ENCODE measurements at regions of chr14 and their contacts with region 1.

Region 1: DNA sequence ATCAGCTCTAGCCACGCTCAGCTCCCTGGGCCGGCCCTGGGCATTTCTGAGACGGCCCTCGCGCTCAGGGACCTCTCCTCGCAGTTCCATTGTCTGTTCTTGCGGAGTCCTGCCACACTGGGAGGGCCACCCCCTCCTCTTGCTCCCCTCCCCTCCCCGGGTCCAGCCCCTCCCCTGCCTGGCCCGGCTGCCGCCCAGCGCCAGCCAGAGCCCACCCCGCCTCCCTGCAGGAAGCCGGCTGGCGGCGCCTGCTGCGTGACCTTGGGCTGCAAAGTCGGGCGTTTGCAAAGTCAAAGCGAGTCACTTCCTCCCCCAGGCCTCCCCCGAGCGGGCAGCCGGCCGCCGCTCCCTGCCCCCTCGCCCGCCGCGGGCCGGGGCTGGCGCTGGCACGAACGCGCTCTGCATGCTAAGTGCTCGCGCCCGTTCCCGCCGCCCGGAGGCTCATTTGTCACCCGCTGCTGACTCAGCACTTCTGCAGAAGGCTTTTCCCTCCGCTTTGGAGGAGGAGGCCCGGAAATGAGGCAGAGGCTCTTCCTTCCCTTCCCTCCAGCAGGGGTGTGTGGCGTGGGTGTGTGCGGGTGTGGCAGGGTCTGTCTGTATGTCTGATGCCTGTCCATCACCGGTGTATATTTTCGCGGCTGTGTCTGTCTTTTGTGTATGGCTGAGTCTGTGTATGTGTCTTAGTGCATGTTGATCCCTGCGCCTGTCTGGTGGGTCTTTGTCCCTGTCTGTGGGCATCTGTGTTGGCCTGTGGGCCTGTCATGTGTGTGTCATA is 72.0 kb downstream of the IRF2BPL start:
- DNase-seq: peak; percentile 85
- H3K4me3 Mint-ChIP-seq: peak overlapping the region; percentile 74
- H3K27ac Mint-ChIP-seq: peak overlapping the region; percentile 90
- H3K4me1 Mint-ChIP-seq: peaks cover 77% of the 10 kb centered on the region
- H3K27me3 Mint-ChIP-seq: no peaks in the 10 kb centered on the region

Region 2: DNA sequence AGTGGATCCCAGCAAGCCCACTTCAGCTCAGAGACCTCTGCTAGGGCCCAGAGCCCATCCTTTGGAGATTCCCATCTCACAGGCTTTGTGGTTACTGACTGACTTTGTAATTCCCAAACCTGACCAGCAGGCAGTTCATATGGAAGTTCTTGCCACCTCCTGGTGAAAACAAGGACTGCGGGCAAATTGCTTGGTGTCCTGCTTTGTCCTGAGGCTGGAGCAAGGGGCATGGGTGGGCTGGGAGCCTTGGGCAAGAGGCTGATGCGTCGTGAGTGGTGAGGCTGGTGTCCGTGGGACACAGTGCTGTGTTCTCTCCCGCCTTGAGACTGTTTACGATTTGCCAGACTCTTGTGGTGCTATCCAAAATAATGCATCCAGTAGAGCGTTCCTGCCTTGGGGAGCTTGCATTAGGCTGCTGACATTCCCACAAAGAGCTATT is 39.3 kb before region 1 on chr14:
- intact Hi-C with region 1: loop called (anchors 1 kb)
- DNase-seq: no peak
- H3K4me3 Mint-ChIP-seq: no peak overlapping the region
- H3K27ac Mint-ChIP-seq: no peak overlapping the region
- H3K4me1 Mint-ChIP-seq: peaks cover 51% of the 10 kb centered on the region
- H3K27me3 Mint-ChIP-seq: no peaks in the 10 kb centered on the region

Region 3: DNA sequence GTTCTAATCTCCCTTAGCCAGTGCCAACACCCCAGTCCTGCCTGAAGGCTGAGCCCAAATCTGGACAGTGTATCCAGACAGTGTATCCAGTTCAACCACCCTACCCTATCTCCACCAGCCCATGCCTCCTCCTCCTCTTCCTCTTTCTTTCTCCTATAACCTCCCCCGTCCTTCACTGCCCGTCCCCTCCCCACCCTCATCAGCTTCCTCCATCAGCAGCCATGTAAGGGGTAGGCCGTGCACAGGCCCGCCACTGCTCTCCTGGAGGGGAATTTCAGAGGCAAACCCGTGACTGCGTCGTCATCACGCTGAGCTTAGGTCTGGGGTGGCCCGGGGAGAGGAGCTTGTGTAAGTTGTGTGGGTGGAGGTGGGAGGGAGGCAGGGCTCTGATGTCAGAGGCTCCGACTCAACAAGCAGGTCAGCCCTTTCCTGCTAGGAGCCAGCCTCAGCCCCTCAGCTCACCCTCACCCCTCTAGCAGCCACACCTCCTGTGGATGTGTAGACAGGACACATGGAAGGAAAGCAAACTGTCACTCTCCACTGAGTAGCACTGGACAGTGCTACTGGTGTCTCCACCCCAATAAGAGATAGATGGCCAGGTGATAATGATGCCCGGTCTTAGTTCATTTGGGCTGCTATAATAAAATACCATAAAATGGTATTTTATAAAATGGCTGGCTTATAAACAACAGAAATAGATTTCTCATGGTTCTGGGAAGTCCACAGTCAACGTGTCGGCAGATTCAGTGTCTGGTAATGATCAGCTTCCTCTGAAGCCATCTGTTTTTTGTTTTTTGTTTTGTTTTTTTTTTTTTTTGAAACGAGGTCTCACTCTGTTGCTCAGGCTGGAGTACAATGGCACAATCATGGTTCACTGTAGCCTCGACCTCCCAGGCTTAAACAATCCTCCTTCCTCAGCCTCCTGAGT is 21.6 kb after region 1 on chr14:
- intact Hi-C with region 1: loop called (anchors 1 kb)
- DNase-seq: peak; percentile 85
- H3K4me3 Mint-ChIP-seq: peak overlapping the region; percentile 45
- H3K27ac Mint-ChIP-seq: peak overlapping the region; percentile 90
- H3K4me1 Mint-ChIP-seq: peaks cover 27% of the 10 kb centered on the region
- H3K27me3 Mint-ChIP-seq: no peaks in the 10 kb centered on the region

Region 4: DNA sequence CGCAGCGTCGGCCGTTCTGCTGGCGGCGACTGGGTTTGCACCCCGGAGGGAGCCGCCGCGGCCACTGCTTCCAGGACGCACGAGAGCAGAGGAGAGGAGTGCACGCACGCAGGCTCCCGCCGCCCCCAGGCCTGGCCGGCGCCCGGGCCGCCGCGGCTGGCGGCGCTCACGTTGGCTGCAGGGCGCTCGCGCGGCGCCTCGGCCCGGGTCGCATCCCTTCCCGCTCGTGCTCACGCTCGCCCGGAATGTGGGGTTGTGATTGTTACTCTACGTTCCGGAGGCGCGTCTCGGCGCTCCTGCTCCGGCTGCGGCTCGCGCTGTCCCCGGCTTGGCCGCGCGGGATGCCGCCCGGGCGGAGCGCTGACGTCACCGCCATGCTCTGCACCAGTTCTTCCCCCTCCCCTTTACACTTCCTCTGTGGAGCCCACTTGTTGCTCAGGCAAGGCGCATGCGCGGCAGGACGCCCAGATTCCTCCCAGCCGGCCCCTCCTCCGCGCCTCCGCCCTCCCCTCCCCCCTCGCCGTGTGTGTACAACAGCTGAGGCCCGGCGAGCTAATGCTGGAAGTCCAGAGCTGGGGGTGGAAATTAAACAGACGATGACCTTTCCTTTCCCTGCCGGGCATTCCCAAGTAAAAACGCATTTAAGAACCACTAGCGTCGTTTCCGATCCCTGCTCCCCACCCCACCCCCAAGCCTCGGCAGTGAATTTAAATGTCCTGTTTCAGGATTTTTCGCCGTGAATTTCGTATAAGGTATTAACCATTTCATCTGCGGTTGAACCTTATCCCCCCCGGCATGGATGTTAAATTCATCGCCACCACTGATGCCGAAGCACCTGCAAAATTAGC is 72.1 kb after region 1 on chr14 and contains the start of gene IRF2BPL:
- intact Hi-C with region 1: loop called (anchors 1 kb)
- DNase-seq: peak; percentile 91
- H3K4me3 Mint-ChIP-seq: peak within 1 kb of the TSS; percentile 94
- H3K27ac Mint-ChIP-seq: peak within 1 kb of the TSS; percentile 97
- H3K4me1 Mint-ChIP-seq: peaks cover 57% of the 10 kb centered on the region
- H3K27me3 Mint-ChIP-seq: no peaks in the 10 kb centered on the region
- total RNA-seq, gene IRF2BPL: 24.9 and 26.5 TPM in 2 replicates

Region 5: DNA sequence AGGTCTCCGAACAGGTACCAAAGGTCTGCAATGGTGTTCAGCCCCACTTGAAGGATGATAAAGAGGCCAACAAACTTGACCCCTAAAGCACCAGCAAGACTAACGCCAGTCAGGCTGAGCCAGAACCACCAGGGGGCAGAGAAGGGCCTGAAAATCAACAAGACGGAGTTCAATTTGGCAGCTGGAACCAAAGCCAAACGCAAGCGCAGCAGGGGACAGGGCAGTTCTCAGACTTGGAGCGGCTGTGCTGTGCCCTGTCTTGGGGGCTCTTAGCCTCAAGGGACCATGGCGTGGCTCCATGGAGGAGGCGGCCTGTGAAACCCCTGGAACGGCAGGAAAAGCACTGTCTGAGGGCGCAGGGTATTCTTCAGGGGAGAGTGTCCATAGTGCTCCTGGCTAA is 344.6 kb after region 1 on chr14:
- intact Hi-C with region 1: loop called (anchors 1 kb)
- DNase-seq: peak; percentile 16
- H3K4me3 Mint-ChIP-seq: no peak overlapping the region
- H3K27ac Mint-ChIP-seq: no peak overlapping the region
- H3K4me1 Mint-ChIP-seq: peaks cover 24% of the 10 kb centered on the region
- H3K27me3 Mint-ChIP-seq: no peaks in the 10 kb centered on the region